Mammary epithelial cell (primary cell): ENCODE measurements at regions of chr1 and their contacts with region 1.

Region 1: GRCh38 chr1:232319072-232319471 is 310.9 kb downstream of the SIPA1L2 start:
- DNase-seq: peak; percentile 71
- H3K4me3 ChIP-seq: no peak overlapping the region
- H3K27ac ChIP-seq: no peak overlapping the region
- H3K4me1 ChIP-seq: peaks cover 11% of the 10 kb centered on the region
- H3K27me3 ChIP-seq: peaks cover 2% of the 10 kb centered on the region
- CTCF ChIP-seq: no peak

Region 2: DNA sequence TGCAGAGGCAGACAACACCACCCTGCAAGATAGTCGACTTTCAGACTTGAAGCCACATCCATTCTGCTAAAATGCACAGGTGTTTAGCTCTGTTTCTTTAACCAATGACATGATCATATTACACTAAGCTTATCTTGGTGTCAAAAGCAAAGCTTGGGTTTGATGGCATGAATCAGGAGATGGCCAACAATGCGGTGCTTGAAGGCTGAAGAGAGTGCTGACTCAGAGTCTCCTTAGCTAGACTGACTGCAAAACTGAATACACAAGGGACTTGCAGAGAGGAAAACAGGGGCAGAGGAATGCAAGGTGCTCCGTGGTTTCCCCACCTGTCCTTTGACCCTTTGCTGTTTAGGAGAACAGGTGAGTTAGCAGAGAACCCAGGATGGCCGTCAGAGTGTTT is 48.2 kb after region 1 on chr1:
- CTCF ChIA-PET with region 1: no interaction called
- dilution Hi-C with region 1: loop called (anchors 5 kb)
- in situ Hi-C with region 1: no loop called
- intact Hi-C with region 1: no loop called
- DNase-seq: no peak
- H3K4me3 ChIP-seq: no peak overlapping the region
- H3K27ac ChIP-seq: no peak overlapping the region
- H3K4me1 ChIP-seq: no peaks in the 10 kb centered on the region
- H3K27me3 ChIP-seq: no peaks in the 10 kb centered on the region
- CTCF ChIP-seq: no peak